ENCODE measurements at regions of chr9 and their contacts with region 1.

Region 1: GRCh38 chr9:75001719-75002422 is 26.2 kb downstream of the CARNMT1 start:
- DNase-seq: peak in 1 of 2 experiments; percentile 36
- H3K4me3 ChIP-seq: no peak overlapping the region
- H3K4me3 Mint-ChIP-seq: no peak overlapping the region
- H3K27ac Mint-ChIP-seq: no peak overlapping the region
- H3K4me1 ChIP-seq: no peaks in the 10 kb centered on the region
- H3K4me1 Mint-ChIP-seq: no peaks in the 10 kb centered on the region
- H3K27me3 ChIP-seq: no peaks in the 10 kb centered on the region
- H3K27me3 Mint-ChIP-seq: no peaks in the 10 kb centered on the region
- CTCF ChIP-seq: no peak

Region 2: GRCh38 chr9:74412236-74412979 is 589.5 kb before region 1 on chr9:
- CTCF ChIA-PET with region 1: no interaction called
- POLR2A ChIA-PET with region 1: no interaction called
- intact Hi-C with region 1: no loop called
- DNase-seq: no peak
- H3K4me3 ChIP-seq: no peak overlapping the region
- H3K4me3 Mint-ChIP-seq: no peak overlapping the region
- H3K27ac Mint-ChIP-seq: no peak overlapping the region
- H3K4me1 ChIP-seq: no peaks in the 10 kb centered on the region
- H3K4me1 Mint-ChIP-seq: no peaks in the 10 kb centered on the region
- H3K27me3 ChIP-seq: no peaks in the 10 kb centered on the region
- H3K27me3 Mint-ChIP-seq: no peaks in the 10 kb centered on the region
- CTCF ChIP-seq: no peak

Region 3: GRCh38 chr9:74773886-74774479 is 227.9 kb before region 1 on chr9:
- CTCF ChIA-PET with region 1: no interaction called
- POLR2A ChIA-PET with region 1: no interaction called
- intact Hi-C with region 1: loop called (anchors 1 kb)
- DNase-seq: peak; percentile 35 to 37
- H3K4me3 ChIP-seq: no peak overlapping the region
- H3K4me3 Mint-ChIP-seq: no peak overlapping the region
- H3K27ac Mint-ChIP-seq: no peak overlapping the region
- H3K4me1 ChIP-seq: no peaks in the 10 kb centered on the region
- H3K4me1 Mint-ChIP-seq: no peaks in the 10 kb centered on the region
- H3K27me3 ChIP-seq: no peaks in the 10 kb centered on the region
- H3K27me3 Mint-ChIP-seq: no peaks in the 10 kb centered on the region
- CTCF ChIP-seq: peak; percentile 34

Region 4: GRCh38 chr9:74940600-74940999 is 61.3 kb before region 1 on chr9:
- CTCF ChIA-PET with region 1: no interaction called
- POLR2A ChIA-PET with region 1: no interaction called
- intact Hi-C with region 1: loop called (anchors 1 kb)
- DNase-seq: peak; percentile 38 to 43
- H3K4me3 ChIP-seq: no peak overlapping the region
- H3K4me3 Mint-ChIP-seq: no peak overlapping the region
- H3K27ac Mint-ChIP-seq: no peak overlapping the region
- H3K4me1 ChIP-seq: no peaks in the 10 kb centered on the region
- H3K4me1 Mint-ChIP-seq: no peaks in the 10 kb centered on the region
- H3K27me3 ChIP-seq: no peaks in the 10 kb centered on the region
- H3K27me3 Mint-ChIP-seq: no peaks in the 10 kb centered on the region
- CTCF ChIP-seq: peak in 1 of 2 experiments; percentile 47

Region 5: DNA sequence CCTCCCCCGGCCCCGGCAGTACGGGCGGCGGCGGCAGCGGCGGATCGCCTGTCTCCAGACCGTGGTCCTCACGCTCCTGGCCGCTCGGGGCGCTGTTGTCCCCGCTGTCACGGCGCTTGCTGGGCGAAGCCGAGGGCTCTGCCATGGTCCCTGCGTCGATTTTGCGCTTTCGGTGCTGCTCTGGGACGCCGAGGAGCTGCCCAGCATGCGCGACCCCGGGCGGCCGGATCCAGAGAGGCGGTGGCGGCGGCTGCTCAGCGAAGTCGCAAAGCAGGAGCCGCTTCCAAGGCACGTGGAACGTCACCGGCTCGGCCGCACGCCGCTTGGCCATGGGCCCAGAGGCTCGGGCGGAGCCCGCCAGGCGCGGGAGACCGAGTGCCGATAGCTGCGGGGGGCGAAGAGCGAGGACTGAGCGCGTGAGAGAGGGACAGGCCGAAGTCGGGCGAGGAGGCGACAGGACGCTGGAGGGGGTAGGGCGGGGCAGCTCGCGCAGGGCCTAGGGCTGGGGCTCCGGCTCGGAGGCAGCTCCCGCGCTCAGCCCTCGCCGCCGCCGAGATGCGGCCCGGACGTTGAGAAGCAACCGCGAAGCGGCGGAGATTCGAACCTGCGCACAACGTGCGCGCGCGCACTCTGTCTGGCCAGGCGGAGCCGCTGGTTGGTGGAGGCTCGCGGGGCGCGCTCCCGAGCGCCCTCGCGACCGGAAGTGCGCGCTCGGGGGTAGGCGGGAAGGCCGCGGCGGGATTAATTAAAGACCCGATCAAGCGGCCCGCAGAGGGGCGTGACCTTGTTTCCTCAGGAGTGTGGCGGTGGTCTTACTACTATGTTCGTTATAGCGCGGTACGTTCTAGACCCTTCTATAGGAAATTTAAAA is 49.4 kb before region 1 on chr9 and contains the start of gene C9orf40:
- CTCF ChIA-PET with region 1: interaction called, 4 read pairs
- POLR2A ChIA-PET with region 1: no interaction called
- intact Hi-C with region 1: loop called (anchors 2 kb)
- DNase-seq: peak; percentile 72 to 77
- H3K4me3 ChIP-seq: peak within 1 kb of the TSS; percentile 69
- H3K4me3 Mint-ChIP-seq: peak within 1 kb of the TSS; percentile 81
- H3K27ac Mint-ChIP-seq: no peak within 1 kb of the TSS
- H3K4me1 ChIP-seq: no peaks in the 10 kb centered on the region
- H3K4me1 Mint-ChIP-seq: no peaks in the 10 kb centered on the region
- H3K27me3 ChIP-seq: no peaks in the 10 kb centered on the region
- H3K27me3 Mint-ChIP-seq: no peaks in the 10 kb centered on the region
- CTCF ChIP-seq: peak in 1 of 2 experiments; percentile 51
- total RNA-seq, gene C9orf40: 3.0 and 3.2 TPM in 2 replicates

Region 6: GRCh38 chr9:75071530-75072124 is 69.8 kb after region 1 on chr9:
- CTCF ChIA-PET with region 1: no interaction called
- POLR2A ChIA-PET with region 1: no interaction called
- intact Hi-C with region 1: loop called (anchors 2 kb)
- DNase-seq: no peak
- H3K4me3 ChIP-seq: no peak overlapping the region
- H3K4me3 Mint-ChIP-seq: no peak overlapping the region
- H3K27ac Mint-ChIP-seq: no peak overlapping the region
- H3K4me1 ChIP-seq: no peaks in the 10 kb centered on the region
- H3K4me1 Mint-ChIP-seq: no peaks in the 10 kb centered on the region
- H3K27me3 ChIP-seq: no peaks in the 10 kb centered on the region
- H3K27me3 Mint-ChIP-seq: no peaks in the 10 kb centered on the region
- CTCF ChIP-seq: no peak